ENCODE measurements at regions of chr7 and their contacts with region 1.

Region 1: DNA sequence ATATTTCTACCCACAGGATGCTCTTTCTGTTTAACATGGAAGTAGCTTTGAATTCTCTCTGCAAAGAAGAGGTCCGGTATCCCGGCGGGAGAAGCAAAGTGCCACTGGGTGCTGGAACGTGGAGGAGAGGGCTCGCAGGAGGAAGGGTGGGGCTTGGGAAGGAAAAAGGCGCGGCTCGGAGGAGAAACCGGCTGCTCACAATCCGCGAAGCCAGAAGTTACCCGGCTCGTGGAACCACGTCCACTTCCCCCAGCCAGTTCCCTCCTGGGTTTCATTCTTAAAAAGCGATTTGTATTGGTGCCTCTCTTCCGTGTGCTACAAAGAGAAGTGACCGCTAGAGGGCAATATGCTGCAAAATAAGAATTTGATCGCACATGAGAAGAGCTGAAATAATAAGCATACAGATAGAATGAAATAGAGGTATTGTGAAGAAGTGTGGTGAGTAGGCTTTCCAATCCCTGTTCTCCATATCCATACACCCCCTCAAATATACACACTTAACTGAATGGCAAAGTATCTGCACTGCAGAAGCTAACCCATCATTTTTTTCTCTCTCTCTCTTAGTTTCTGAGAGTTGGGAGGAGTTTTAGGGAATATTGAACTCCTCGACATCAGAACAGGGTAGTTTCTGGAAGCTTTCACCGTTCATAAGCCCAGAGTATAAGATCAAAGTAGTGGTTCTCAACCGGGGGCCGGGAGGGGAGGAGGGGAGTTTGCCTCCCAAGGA is 31.1 kb downstream of the TRIL start:
- DNase-seq: peak; percentile 76
- H3K4me3 ChIP-seq: peak overlapping the region; percentile 72
- H3K27ac ChIP-seq: no peak overlapping the region
- H3K27me3 ChIP-seq: peaks cover 27% of the 10 kb centered on the region
- CTCF ChIP-seq: peak; percentile 88

Region 2: DNA sequence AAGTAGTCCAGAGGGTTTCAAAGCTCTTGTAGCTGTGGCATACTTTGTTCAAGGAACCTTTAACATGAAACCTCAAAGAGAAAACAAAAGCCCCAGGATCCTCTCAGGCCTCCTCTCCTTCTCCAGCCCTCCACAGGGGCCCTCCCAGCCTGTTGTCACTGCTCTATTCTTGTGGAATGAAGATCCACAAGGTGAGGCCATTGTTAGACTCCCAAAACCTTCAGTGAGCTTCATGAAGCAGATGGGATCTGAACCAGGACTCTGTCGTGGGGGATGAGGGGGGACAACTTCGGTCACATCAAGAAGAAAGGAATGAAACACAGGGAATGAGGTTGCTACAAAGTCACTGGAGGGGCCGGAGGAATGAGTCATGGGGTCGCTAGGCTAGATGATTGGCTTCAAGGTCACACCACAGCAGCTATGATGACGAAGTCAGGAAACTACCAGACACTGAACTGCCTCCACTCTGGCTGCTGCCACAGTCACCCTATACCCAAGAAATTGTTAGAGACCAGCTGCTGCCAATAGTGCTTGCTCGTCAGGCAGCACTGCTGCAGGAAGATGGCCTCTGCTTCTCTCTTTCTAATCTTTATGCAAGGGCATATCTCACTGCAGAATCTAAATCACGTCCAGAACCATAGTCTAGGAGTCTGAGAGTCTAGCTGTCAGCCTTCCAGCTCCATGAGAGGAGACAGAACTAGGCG is 1473.2 kb before region 1 on chr7:
- CTCF ChIA-PET with region 1: no interaction called
- POLR2A ChIA-PET with region 1: no interaction called
- DNase-seq: peak; percentile 24
- H3K4me3 ChIP-seq: no peak overlapping the region
- H3K27ac ChIP-seq: peak overlapping the region; percentile 11
- H3K27me3 ChIP-seq: no peaks in the 10 kb centered on the region
- CTCF ChIP-seq: no peak

Region 3: GRCh38 chr7:28939844-28940544 is 13.0 kb after region 1 on chr7:
- CTCF ChIA-PET with region 1: interaction called, 30 read pairs
- POLR2A ChIA-PET with region 1: no interaction called
- DNase-seq: no peak
- H3K4me3 ChIP-seq: no peak overlapping the region
- H3K27ac ChIP-seq: no peak overlapping the region
- H3K27me3 ChIP-seq: peaks cover 14% of the 10 kb centered on the region
- CTCF ChIP-seq: no peak

Region 4: GRCh38 chr7:28990200-28990960 is 63.3 kb after region 1 on chr7:
- CTCF ChIA-PET with region 1: interaction called, 12 read pairs
- POLR2A ChIA-PET with region 1: no interaction called
- DNase-seq: no peak
- H3K4me3 ChIP-seq: no peak overlapping the region
- H3K27ac ChIP-seq: no peak overlapping the region
- H3K27me3 ChIP-seq: peaks cover 4% of the 10 kb centered on the region
- CTCF ChIP-seq: no peak

Region 5: GRCh38 chr7:29019387-29019786 is 92.4 kb after region 1 on chr7:
- CTCF ChIA-PET with region 1: interaction called, 38 read pairs
- POLR2A ChIA-PET with region 1: no interaction called
- DNase-seq: no peak
- H3K4me3 ChIP-seq: no peak overlapping the region
- H3K27ac ChIP-seq: no peak overlapping the region
- H3K27me3 ChIP-seq: peaks cover 4% of the 10 kb centered on the region
- CTCF ChIP-seq: peak; percentile 43

Region 6: GRCh38 chr7:29105752-29106668 is 179.0 kb after region 1 on chr7:
- CTCF ChIA-PET with region 1: interaction called, 930 read pairs
- POLR2A ChIA-PET with region 1: no interaction called
- DNase-seq: peak; percentile 8
- H3K4me3 ChIP-seq: no peak overlapping the region
- H3K27ac ChIP-seq: no peak overlapping the region
- H3K27me3 ChIP-seq: peaks cover 13% of the 10 kb centered on the region
- CTCF ChIP-seq: peak; percentile 95

Region 7: GRCh38 chr7:29408841-29409243 is 481.8 kb after region 1 on chr7:
- CTCF ChIA-PET with region 1: interaction called, 268 read pairs
- POLR2A ChIA-PET with region 1: no interaction called
- DNase-seq: peak; percentile 16
- H3K4me3 ChIP-seq: no peak overlapping the region
- H3K27ac ChIP-seq: no peak overlapping the region
- H3K27me3 ChIP-seq: no peaks in the 10 kb centered on the region
- CTCF ChIP-seq: peak; percentile 82

Measured in AG04450 (cell line).